Activated T-helper 1 cell treated with anti-CD3 and anti-CD28 coated beads, Interleukin-12 subunit alpha, Interleukin-12 subunit beta, Interleukin-2, Interleukin-4 antibody, amounts not matched to agents 30 ng/mL and 10 ng/mL and 1 ng/mL, durations not matched to agents 14 hours and 24 hours and 36 hours (primary cell): ENCODE measurements at regions of chr1 and their contacts with region 1.

Region 1: DNA sequence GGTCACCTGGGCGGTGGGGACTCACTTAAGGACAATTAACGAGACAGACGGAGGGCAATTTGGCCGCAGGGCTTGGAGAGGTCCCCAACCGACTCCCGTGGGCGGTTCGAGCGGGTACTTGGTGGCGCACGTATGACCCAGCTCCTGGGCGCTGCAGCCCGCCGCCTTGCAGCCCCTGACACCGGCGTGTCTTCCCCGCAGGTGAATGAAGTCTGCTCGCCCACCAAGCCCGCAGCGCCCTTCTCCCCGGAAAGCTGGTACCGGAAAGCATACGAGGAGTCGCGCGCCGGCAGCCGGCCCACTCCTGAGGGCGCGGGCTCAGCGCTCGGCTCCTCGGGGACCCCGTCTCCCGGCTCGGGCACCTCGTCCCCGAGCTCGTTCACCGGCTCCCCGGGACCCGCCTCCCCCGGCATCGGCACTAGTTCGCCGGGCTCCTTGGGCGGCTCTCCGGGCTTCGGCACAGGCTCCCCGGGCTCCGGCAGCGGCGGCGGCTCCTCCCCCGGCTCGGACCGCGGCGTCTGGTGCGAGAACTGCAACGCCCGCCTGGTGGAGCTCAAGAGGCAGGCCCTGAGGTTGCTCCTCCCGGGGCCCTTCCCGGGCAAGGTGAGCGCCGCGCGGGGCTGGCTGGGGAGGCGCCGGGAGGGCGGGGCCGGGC is 1.4 kb downstream of the KIF26B start:
- DNase-seq: peak; percentile 78
- H3K4me3 Mint-ChIP-seq: peak overlapping the region; percentile 77
- H3K27ac Mint-ChIP-seq: no peak overlapping the region
- H3K4me1 Mint-ChIP-seq: peaks cover 13% of the 10 kb centered on the region
- H3K27me3 Mint-ChIP-seq: peaks cover 62% of the 10 kb centered on the region

Region 2: DNA sequence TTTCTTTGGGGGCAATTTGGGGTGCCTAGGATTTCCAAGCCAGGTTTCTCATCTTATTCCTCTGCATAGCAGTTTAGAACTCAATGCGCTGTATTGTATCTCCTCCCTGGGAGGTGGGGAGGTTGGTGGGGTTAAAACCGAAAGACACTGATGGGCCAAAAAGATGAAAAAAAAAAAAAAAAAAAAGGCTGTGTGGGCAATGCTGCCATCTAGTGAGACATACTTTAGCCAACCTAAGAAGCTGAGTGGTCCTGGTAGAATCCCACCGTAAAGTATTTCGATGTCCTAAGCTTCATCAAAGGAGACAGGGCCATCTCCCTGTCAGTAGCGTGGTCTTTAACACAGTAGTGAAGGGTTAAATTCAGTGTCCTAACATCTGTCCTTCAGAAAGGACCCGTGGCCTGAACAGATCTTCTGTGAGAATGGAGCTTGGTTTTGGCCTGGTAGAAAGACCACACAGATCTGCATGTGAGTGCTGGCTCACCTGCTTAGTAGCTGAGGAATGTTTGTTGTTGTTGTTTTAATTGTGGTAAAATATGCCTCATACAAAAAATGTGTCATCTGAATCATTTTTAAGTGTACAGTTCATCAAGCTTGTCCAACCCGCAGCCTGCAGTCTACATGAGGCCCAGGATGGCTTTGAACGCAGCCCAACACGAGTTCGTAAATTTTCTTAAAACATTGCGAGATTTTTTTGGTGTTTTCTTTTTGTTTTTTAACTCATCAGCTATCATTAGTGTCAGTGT is 224.8 kb after region 1 on chr1:
- intact Hi-C with region 1: loop called (anchors 5 kb)
- DNase-seq: no peak
- H3K4me3 Mint-ChIP-seq: no peak overlapping the region
- H3K27ac Mint-ChIP-seq: no peak overlapping the region
- H3K4me1 Mint-ChIP-seq: peaks cover 20% of the 10 kb centered on the region
- H3K27me3 Mint-ChIP-seq: peaks cover 5% of the 10 kb centered on the region

Region 3: DNA sequence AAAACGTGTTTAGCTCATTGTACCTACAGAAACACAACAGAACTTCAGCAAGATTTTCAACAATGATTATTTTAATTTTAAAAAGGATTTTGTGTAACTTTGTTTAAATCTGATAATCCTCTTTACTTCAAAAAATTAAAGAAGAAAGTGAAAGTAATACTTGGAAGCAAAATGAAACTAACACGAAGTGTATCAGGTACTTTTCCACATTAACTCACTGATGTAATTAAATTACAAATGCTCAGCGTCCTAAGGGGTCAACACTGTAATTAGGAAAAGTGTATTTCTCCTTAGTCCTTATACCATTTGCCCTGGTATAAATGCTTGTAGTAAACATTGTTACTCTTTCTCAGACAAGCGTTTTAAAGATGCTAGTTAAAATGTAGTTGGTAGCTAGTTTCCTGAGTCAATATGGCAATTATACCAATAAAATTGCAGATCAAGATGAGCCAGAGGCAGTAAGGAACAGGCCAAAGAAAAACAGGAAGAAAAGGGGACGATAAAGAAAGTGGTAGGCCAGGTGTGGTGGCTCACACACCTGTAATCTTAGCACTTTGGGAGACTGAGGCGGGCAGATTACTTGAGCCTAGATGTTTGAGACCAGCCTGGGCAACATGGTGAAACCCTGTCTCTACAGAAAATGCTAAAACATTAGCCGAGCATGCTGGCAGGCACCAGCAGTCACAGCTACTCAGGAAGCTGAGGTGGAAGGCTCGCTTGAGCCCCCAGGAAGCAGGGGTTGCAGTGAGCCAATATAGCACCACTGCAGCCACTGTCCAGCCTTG is 797.9 kb after region 1 on chr1:
- intact Hi-C with region 1: loop called (anchors 2 kb)
- DNase-seq: no peak
- H3K4me3 Mint-ChIP-seq: peak overlapping the region; percentile 75
- H3K27ac Mint-ChIP-seq: peak overlapping the region; percentile 88
- H3K4me1 Mint-ChIP-seq: peaks cover 26% of the 10 kb centered on the region
- H3K27me3 Mint-ChIP-seq: no peaks in the 10 kb centered on the region

Region 4: GRCh38 chr1:246117066-246117791 is 961.0 kb after region 1 on chr1:
- intact Hi-C with region 1: loop called (anchors 10 kb)
- DNase-seq: peak; percentile 1
- H3K4me3 Mint-ChIP-seq: peak overlapping the region; percentile 64
- H3K27ac Mint-ChIP-seq: no peak overlapping the region
- H3K4me1 Mint-ChIP-seq: peaks cover 11% of the 10 kb centered on the region
- H3K27me3 Mint-ChIP-seq: no peaks in the 10 kb centered on the region

Region 5: GRCh38 chr1:246497331-246497915 is 1341.2 kb after region 1 on chr1:
- intact Hi-C with region 1: loop called (anchors 1 kb)
- DNase-seq: no peak
- H3K4me3 Mint-ChIP-seq: no peak overlapping the region
- H3K27ac Mint-ChIP-seq: peak overlapping the region; percentile 26
- H3K4me1 Mint-ChIP-seq: peaks cover 11% of the 10 kb centered on the region
- H3K27me3 Mint-ChIP-seq: no peaks in the 10 kb centered on the region